Cardiac septum (tissue), 1 donor: ENCODE measurements at regions of chr11 and their contacts with region 1.

Region 1: GRCh38 chr11:84780689-84781293 is 846.4 kb downstream of the DLG2 start:
- DNase-seq: no peak

Region 2: GRCh38 chr11:84899740-84900139 is 118.9 kb after region 1 on chr11:
- intact Hi-C with region 1: no loop called
- DNase-seq: no peak

Region 3: GRCh38 chr11:85590848-85591483 is 810.2 kb after region 1 on chr11:
- intact Hi-C with region 1: loop called (anchors 5 kb)
- DNase-seq: no peak